GM13977 (cell line): ENCODE measurements at regions of chr12 and their contacts with region 1.

Region 1: DNA sequence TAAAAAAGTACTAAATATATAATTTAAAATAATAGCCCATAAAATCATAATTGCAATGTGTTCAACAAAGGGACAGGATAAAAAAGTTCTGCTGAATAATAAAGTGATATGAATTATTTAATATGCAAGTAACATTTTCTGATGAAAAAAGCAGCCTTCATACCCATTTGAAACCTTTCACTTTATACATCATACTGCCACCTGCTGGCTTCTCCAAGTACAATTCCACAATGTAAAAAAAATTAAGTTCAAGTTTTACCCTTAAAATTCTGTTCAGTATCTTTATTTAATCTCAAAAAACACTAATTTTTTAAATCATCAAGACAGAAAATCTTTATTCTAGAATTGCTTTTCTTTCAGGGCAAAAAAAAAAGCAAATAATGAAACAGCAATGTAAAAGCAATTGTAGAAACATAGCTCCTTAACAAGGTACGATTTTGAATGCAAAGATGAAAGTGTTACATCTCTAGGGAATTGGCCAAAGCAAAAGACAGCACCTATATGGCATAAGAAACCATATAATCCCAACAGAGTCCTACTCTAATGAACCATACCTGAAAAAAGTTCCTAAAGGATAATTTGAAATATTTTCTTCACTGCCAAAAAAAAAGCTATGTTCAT is 15.0 kb downstream of the MDM1 start:
- DNase-seq: peak; percentile 50
- CTCF ChIP-seq: peak; percentile 48

Region 2: GRCh38 chr12:68040450-68041075 is 276.6 kb before region 1 on chr12:
- in situ Hi-C with region 1: loop called (anchors 25 kb)
- DNase-seq: peak; percentile 59
- CTCF ChIP-seq: peak; percentile 91

Region 3: GRCh38 chr12:68236421-68237059 is 80.6 kb before region 1 on chr12:
- in situ Hi-C with region 1: loop called (anchors 10 kb)
- DNase-seq: peak; percentile 27
- CTCF ChIP-seq: no peak